CD14-positive monocyte (primary cell): ENCODE measurements at regions of chr6 and their contacts with region 1.

Region 1: GRCh38 chr6:36678518-36679027 is at the start of gene CDKN1A:
- DNase-seq: peak; percentile 97 to 98 (median 98)
- H3K4me3 ChIP-seq: peak within 1 kb of the TSS; percentile 76 to 90 (median 81)
- H3K4me3 Mint-ChIP-seq: peak within 1 kb of the TSS; percentile 97 to 98
- H3K27ac ChIP-seq: peak within 1 kb of the TSS; percentile 71 to 93
- H3K27ac Mint-ChIP-seq: peak within 1 kb of the TSS; percentile 95 to 100 (median 97)
- H3K4me1 ChIP-seq: peaks cover 57 to 62% of the 10 kb centered on the region in 2 donors
- H3K4me1 Mint-ChIP-seq: peaks cover 51% of the 10 kb centered on the region
- H3K27me3 ChIP-seq: peaks cover 0 to 19% of the 10 kb centered on the region in 2 donors
- H3K27me3 Mint-ChIP-seq: peaks cover 22 to 37% (median 23%) of the 10 kb centered on the region in 3 donors
- CTCF ChIP-seq: no peak
- polyA plus RNA-seq, gene CDKN1A: 117 to 1,223 (median 144) TPM

Region 2: DNA sequence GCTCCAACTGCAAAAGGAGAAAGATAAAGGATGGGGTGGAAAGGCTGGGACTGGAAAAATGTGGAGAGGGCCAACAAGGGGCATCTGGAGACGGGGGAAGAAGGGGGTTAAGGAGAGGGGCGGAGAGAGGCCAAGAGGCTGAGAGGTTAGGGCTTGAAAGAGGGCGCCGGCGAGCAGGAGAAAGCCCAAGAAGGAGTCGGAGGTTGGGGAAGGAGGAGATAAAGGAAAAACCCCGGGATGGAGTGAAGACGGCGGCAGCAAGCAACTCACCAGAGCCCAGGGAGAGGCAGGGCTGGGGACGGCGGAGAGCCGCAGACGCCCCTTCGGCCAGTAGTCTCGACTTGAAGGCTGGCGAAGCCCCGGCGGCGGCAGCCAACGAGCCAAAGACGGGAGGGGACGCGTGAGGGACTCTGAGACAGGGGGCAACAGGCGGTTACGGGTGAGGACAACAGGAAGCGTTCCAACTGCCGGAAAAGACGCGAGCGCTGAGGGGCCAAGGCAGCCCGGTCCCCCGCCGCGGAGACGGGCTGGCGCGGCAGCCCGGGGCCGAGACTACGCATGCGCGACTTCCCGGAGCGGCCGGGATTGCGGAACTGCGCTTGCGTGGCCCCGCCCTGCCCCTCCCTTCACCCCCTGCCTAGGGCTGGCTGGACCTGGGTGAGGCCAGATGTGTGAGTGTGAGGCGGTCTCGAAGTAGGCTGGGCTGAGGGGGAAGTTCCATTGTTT is 131.5 kb before region 1 on chr6 and contains the start of gene STK38:
- intact Hi-C with region 1: loop called in 1 of 2 experiments (anchors 5 kb)
- DNase-seq: peak; percentile 91 to 95 (median 91)
- H3K4me3 ChIP-seq: peak within 1 kb of the TSS; percentile 77 to 100 (median 96)
- H3K4me3 Mint-ChIP-seq: peak within 1 kb of the TSS; percentile 98 to 99
- H3K27ac ChIP-seq: peak within 1 kb of the TSS; percentile 64 to 90
- H3K27ac Mint-ChIP-seq: peak within 1 kb of the TSS; percentile 93 to 99 (median 95)
- H3K4me1 ChIP-seq: peaks cover 40 to 59% of the 10 kb centered on the region in 2 donors
- H3K4me1 Mint-ChIP-seq: peaks cover 49% of the 10 kb centered on the region
- H3K27me3 ChIP-seq: no peaks in the 10 kb centered on the region
- H3K27me3 Mint-ChIP-seq: peaks cover 0 to 3% (median 0%) of the 10 kb centered on the region in 3 donors
- CTCF ChIP-seq: peak; percentile 8
- polyA plus RNA-seq, gene STK38: 57.1 to 95.7 (median 58.4) TPM

Region 3: GRCh38 chr6:36615018-36615761 is 63.4 kb before region 1 on chr6:
- intact Hi-C with region 1: loop called in 1 of 2 experiments (anchors 2 kb)
- DNase-seq: peak; percentile 79 to 82 (median 82)
- H3K4me3 ChIP-seq: no peak overlapping the region
- H3K4me3 Mint-ChIP-seq: no peak overlapping the region
- H3K27ac ChIP-seq: no peak overlapping the region
- H3K27ac Mint-ChIP-seq: peak overlapping the region; percentile 28 to 83 (median 71)
- H3K4me1 ChIP-seq: peaks cover 24 to 38% of the 10 kb centered on the region in 2 donors
- H3K4me1 Mint-ChIP-seq: peaks cover 33% of the 10 kb centered on the region
- H3K27me3 ChIP-seq: no peaks in the 10 kb centered on the region
- H3K27me3 Mint-ChIP-seq: no peaks in the 10 kb centered on the region
- CTCF ChIP-seq: peak; percentile 84

Region 4: GRCh38 chr6:36623547-36624459 is 54.8 kb before region 1 on chr6:
- intact Hi-C with region 1: loop called in 1 of 2 experiments (anchors 2 kb)
- DNase-seq: peak; percentile 70 to 81 (median 77)
- H3K4me3 ChIP-seq: peak overlapping the region in 1 of 3 experiments; percentile 51
- H3K4me3 Mint-ChIP-seq: peak overlapping the region in 1 of 2 donors; percentile 69
- H3K27ac ChIP-seq: peak overlapping the region in 1 of 2 donors; percentile 72
- H3K27ac Mint-ChIP-seq: peak overlapping the region; percentile 47 to 93 (median 83)
- H3K4me1 ChIP-seq: peaks cover 47 to 54% of the 10 kb centered on the region in 2 donors
- H3K4me1 Mint-ChIP-seq: peaks cover 54% of the 10 kb centered on the region
- H3K27me3 ChIP-seq: no peaks in the 10 kb centered on the region
- H3K27me3 Mint-ChIP-seq: peaks cover 2 to 5% (median 4%) of the 10 kb centered on the region in 3 donors
- CTCF ChIP-seq: peak; percentile 91

Region 5: GRCh38 chr6:36759148-36759759 is 80.7 kb after region 1 on chr6:
- intact Hi-C with region 1: loop called (anchors 2 to 5 kb)
- DNase-seq: peak; percentile 78 to 82 (median 78)
- H3K4me3 ChIP-seq: no peak overlapping the region
- H3K4me3 Mint-ChIP-seq: no peak overlapping the region
- H3K27ac ChIP-seq: no peak overlapping the region
- H3K27ac Mint-ChIP-seq: peak overlapping the region in 5 of 7 donors; percentile 39 to 84 (median 79)
- H3K4me1 ChIP-seq: peaks cover 42 to 44% of the 10 kb centered on the region in 2 donors
- H3K4me1 Mint-ChIP-seq: peaks cover 49% of the 10 kb centered on the region
- H3K27me3 ChIP-seq: no peaks in the 10 kb centered on the region
- H3K27me3 Mint-ChIP-seq: peaks cover 0 to 9% (median 2%) of the 10 kb centered on the region in 3 donors
- CTCF ChIP-seq: peak; percentile 97

Region 6: GRCh38 chr6:36851149-36851614 is 172.6 kb after region 1 on chr6:
- intact Hi-C with region 1: loop called in 1 of 2 experiments (anchors 5 kb)
- DNase-seq: peak; percentile 41 to 69 (median 58)
- H3K4me3 ChIP-seq: no peak overlapping the region
- H3K4me3 Mint-ChIP-seq: peak overlapping the region in 1 of 2 donors; percentile 30
- H3K27ac ChIP-seq: no peak overlapping the region
- H3K27ac Mint-ChIP-seq: peak overlapping the region in 1 of 7 donors; percentile 94
- H3K4me1 ChIP-seq: peaks cover 49 to 55% of the 10 kb centered on the region in 2 donors
- H3K4me1 Mint-ChIP-seq: peaks cover 59% of the 10 kb centered on the region
- H3K27me3 ChIP-seq: no peaks in the 10 kb centered on the region
- H3K27me3 Mint-ChIP-seq: peaks cover 3 to 9% (median 6%) of the 10 kb centered on the region in 3 donors
- CTCF ChIP-seq: peak; percentile 84